ENCODE measurements at regions of chr12 and their contacts with region 1.

Region 1: GRCh38 chr12:49838973-49839633 is 3.8 kb downstream of the BCDIN3D start:
- DNase-seq: peak; percentile 16
- H3K4me3 Mint-ChIP-seq: no peak overlapping the region
- H3K27ac Mint-ChIP-seq: no peak overlapping the region
- H3K4me1 Mint-ChIP-seq: peaks cover 22% of the 10 kb centered on the region
- H3K27me3 Mint-ChIP-seq: no peaks in the 10 kb centered on the region
- CTCF ChIP-seq: peak; percentile 20

Region 2: GRCh38 chr12:49776413-49776812 is 62.7 kb before region 1 on chr12:
- CTCF ChIA-PET with region 1: interaction called, 6 read pairs
- intact Hi-C with region 1: loop called (anchors 1 kb)
- DNase-seq: peak; percentile 69
- H3K4me3 Mint-ChIP-seq: no peak overlapping the region
- H3K27ac Mint-ChIP-seq: no peak overlapping the region
- H3K4me1 Mint-ChIP-seq: peaks cover 11% of the 10 kb centered on the region
- H3K27me3 Mint-ChIP-seq: peaks cover 29% of the 10 kb centered on the region
- CTCF ChIP-seq: peak; percentile 58

Region 3: DNA sequence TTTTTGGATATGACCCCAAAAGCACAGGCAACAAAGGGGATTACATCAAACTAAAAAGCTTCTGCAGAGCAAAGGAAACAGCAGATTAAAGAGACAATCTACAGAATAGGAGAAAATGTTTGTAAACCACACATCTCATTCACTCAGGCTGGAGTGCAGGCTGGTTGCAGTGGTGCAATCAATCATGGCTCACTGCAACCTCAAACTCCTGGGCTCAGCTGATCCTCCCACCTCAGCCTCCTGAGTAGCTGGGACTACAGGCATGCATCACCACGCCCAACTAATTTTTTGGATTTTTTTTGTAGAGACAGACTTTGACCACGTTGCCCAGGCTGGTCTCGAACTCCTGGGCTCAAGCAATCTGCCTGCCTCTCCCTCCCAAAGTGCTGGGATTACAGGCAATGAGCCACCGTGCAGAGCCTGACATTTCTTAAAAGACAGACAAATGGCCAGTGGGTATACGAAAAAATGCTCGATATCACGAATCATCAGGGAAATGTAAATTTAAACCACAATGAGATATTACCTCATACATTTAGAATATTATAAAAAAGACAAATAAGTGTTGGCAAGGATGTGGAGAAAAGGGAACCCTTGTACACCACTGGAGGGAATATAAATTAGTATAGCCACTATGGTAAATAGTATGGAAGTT is 20.7 kb before region 1 on chr12:
- CTCF ChIA-PET with region 1: no interaction called
- intact Hi-C with region 1: no loop called
- DNase-seq: no peak
- H3K4me3 Mint-ChIP-seq: no peak overlapping the region
- H3K27ac Mint-ChIP-seq: no peak overlapping the region
- H3K4me1 Mint-ChIP-seq: no peaks in the 10 kb centered on the region
- H3K27me3 Mint-ChIP-seq: no peaks in the 10 kb centered on the region
- CTCF ChIP-seq: no peak

Region 4: GRCh38 chr12:49893753-49894752 is 55.0 kb after region 1 on chr12:
- CTCF ChIA-PET with region 1: no interaction called
- intact Hi-C with region 1: no loop called
- DNase-seq: peak; percentile 69
- H3K4me3 Mint-ChIP-seq: no peak overlapping the region
- H3K27ac Mint-ChIP-seq: no peak overlapping the region
- H3K4me1 Mint-ChIP-seq: peaks cover 15% of the 10 kb centered on the region
- H3K27me3 Mint-ChIP-seq: peaks cover 26% of the 10 kb centered on the region
- CTCF ChIP-seq: no peak

Region 5: DNA sequence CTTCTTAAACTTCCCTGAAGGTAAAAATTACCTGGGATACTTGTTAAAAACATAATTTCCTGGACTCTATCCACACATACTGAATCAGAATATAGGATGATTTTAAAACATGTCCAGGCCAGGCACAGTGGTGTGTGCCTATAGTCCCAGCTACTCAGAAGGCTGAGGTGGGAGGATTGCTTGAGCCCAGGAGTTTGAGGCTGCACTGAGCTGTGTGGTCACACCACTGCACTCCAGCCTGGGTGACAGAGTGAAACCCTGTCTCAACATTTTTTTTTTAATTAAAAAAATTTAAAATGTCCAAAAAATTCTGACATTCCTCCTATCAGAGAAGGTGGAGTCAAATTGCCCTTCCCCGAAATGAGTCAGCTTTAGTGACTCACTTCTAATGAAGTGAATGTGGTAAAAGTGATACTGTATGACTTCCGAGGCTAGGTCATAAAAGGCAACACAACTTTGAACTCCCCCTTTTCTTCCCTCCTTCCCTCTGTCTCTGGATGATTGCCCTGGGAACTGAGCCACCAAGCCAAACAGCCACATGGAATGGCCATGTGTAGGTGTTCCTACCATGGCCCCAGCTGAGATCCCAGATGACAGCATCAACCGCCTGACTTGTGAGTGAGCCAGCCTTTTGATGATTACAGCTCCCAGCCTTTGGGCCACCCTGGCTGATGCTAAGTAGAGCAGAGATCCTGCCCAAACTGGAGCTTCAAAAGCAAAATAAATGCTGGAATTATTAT is 407.9 kb after region 1 on chr12:
- CTCF ChIA-PET with region 1: no interaction called
- intact Hi-C with region 1: no loop called
- DNase-seq: peak; percentile 63
- H3K4me3 Mint-ChIP-seq: no peak overlapping the region
- H3K27ac Mint-ChIP-seq: peak overlapping the region; percentile 61
- H3K4me1 Mint-ChIP-seq: peaks cover 61% of the 10 kb centered on the region
- H3K27me3 Mint-ChIP-seq: no peaks in the 10 kb centered on the region
- CTCF ChIP-seq: no peak